Activated CD4-positive, alpha-beta memory T cell treated with anti-CD3 and anti-CD28 coated beads, Interleukin-2, amount 10 ng/mL, durations not matched to agents 7 days and 5 days (primary cell): ENCODE measurements at regions of chr5 and their contacts with region 1.

Region 1: GRCh38 chr5:149618581-149619251 is 37.4 kb downstream of the ARHGEF37 start:
- DNase-seq: peak; percentile 45
- H3K4me3 Mint-ChIP-seq: no peak overlapping the region
- H3K27ac Mint-ChIP-seq: no peak overlapping the region
- H3K4me1 Mint-ChIP-seq: peaks cover 27% of the 10 kb centered on the region
- H3K27me3 Mint-ChIP-seq: peaks cover 4% of the 10 kb centered on the region

Region 2: DNA sequence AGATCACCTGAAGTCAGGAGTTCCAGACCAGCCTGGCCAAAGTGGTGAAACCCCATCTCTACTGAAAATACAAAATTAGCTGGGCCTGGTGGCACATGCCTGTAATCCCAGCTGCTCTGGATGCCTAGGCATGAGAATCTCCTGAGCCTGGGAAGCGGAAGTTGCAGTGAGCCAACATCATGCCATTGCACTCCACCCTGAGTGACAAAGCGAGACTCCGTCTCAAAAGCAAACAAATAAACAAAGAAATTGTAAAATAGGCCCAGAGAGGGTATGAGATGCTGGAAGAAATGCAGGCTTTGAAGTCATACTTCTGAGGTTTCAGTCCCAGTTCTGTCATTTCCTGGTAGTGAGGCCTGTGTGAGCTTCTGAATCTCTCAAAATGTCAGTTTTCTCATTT is 42.7 kb before region 1 on chr5:
- CTCF ChIA-PET with region 1: interaction called, 24 read pairs
- POLR2A ChIA-PET with region 1: no interaction called
- DNase-seq: no peak
- H3K4me3 Mint-ChIP-seq: no peak overlapping the region
- H3K27ac Mint-ChIP-seq: peak overlapping the region; percentile 70
- H3K4me1 Mint-ChIP-seq: peaks cover 18% of the 10 kb centered on the region
- H3K27me3 Mint-ChIP-seq: peaks cover 7% of the 10 kb centered on the region

Region 3: GRCh38 chr5:149581192-149581861 is 37.4 kb before region 1 on chr5 and contains the start of gene ARHGEF37:
- CTCF ChIA-PET with region 1: interaction called, 24 read pairs
- POLR2A ChIA-PET with region 1: no interaction called
- DNase-seq: peak; percentile 41
- H3K4me3 Mint-ChIP-seq: peak within 1 kb of the TSS; percentile 71
- H3K27ac Mint-ChIP-seq: no peak within 1 kb of the TSS
- H3K4me1 Mint-ChIP-seq: peaks cover 18% of the 10 kb centered on the region
- H3K27me3 Mint-ChIP-seq: peaks cover 14% of the 10 kb centered on the region
- total RNA-seq, gene ARHGEF37: 0.88 to 1.1 TPM

Region 4: GRCh38 chr5:149605998-149606724 is 12.6 kb before region 1 on chr5:
- CTCF ChIA-PET with region 1: interaction called, 39 read pairs
- POLR2A ChIA-PET with region 1: interaction called, 15 read pairs
- DNase-seq: peak; percentile 61
- H3K4me3 Mint-ChIP-seq: peak overlapping the region; percentile 57
- H3K27ac Mint-ChIP-seq: peak overlapping the region; percentile 79
- H3K4me1 Mint-ChIP-seq: peaks cover 26% of the 10 kb centered on the region
- H3K27me3 Mint-ChIP-seq: no peaks in the 10 kb centered on the region